Activated CD4-positive, alpha-beta memory T cell treated with anti-CD3 and anti-CD28 coated beads, Interleukin-2, amount 10 ng/mL, durations not matched to agents 7 days and 5 days (primary cell): ENCODE measurements at regions of chr16 and their contacts with region 1.

Region 1: DNA sequence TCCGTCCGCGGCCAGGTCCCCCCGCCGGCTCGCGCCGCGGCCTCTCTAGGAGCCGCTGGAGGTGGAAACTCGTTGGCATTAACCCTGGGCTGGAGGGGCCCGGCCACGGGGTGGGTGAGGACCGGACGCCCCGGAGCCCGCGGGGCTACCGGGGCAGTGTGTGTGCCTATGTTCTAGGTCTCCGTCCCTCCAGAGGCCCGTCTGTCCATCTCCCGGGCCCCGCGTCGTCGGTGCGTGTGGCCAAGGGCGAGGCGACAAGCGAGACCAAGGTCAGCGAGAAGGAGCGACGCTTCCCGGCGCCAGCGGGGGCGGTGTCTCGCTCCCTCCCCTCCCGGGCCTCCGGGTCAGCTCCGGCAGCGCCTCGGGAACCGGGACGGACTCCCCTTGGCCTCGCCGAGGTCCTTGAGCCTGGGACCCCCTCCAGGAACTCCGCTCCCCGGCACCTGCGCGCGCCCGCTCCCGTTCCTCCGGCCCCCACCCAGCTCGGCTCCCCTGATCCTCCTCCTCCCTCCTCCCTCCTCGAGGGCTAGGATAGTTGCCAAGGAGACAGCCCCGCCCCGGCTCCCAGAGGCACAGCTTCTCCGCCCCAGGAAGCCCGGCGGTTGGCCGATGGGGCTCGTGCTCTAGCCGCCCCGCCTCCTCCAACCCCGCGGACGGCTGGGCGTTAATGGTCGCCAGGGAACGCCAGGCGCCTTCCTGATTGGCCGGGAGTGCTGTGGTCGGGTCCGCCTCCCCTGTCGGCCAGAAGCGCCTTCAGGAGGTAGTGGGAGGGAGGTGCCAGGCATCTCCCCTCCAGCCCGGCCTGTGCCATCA is 663 bp upstream of the ZNF768 start:
- DNase-seq: peak; percentile 97
- H3K4me3 Mint-ChIP-seq: peak overlapping the region; percentile 78
- H3K27ac Mint-ChIP-seq: peak overlapping the region; percentile 67
- H3K4me1 Mint-ChIP-seq: peaks cover 40% of the 10 kb centered on the region
- H3K27me3 Mint-ChIP-seq: no peaks in the 10 kb centered on the region

Region 2: GRCh38 chr16:30509081-30509765 is 17.8 kb before region 1 on chr16:
- CTCF ChIA-PET with region 1: no interaction called
- POLR2A ChIA-PET with region 1: interaction called, 11 read pairs
- DNase-seq: no peak
- H3K4me3 Mint-ChIP-seq: no peak overlapping the region
- H3K27ac Mint-ChIP-seq: peak overlapping the region; percentile 19
- H3K4me1 Mint-ChIP-seq: peaks cover 9% of the 10 kb centered on the region
- H3K27me3 Mint-ChIP-seq: no peaks in the 10 kb centered on the region

Region 3: GRCh38 chr16:30557957-30558788 is 31.1 kb after region 1 on chr16 and contains the start of gene ZNF764:
- CTCF ChIA-PET with region 1: interaction called, 18 read pairs
- POLR2A ChIA-PET with region 1: interaction called, 20 read pairs
- DNase-seq: peak; percentile 99
- H3K4me3 Mint-ChIP-seq: peak within 1 kb of the TSS; percentile 86
- H3K27ac Mint-ChIP-seq: peak within 1 kb of the TSS; percentile 90
- H3K4me1 Mint-ChIP-seq: peaks cover 51% of the 10 kb centered on the region
- H3K27me3 Mint-ChIP-seq: no peaks in the 10 kb centered on the region
- total RNA-seq, gene ZNF764: 16.0 to 16.8 TPM

Region 4: DNA sequence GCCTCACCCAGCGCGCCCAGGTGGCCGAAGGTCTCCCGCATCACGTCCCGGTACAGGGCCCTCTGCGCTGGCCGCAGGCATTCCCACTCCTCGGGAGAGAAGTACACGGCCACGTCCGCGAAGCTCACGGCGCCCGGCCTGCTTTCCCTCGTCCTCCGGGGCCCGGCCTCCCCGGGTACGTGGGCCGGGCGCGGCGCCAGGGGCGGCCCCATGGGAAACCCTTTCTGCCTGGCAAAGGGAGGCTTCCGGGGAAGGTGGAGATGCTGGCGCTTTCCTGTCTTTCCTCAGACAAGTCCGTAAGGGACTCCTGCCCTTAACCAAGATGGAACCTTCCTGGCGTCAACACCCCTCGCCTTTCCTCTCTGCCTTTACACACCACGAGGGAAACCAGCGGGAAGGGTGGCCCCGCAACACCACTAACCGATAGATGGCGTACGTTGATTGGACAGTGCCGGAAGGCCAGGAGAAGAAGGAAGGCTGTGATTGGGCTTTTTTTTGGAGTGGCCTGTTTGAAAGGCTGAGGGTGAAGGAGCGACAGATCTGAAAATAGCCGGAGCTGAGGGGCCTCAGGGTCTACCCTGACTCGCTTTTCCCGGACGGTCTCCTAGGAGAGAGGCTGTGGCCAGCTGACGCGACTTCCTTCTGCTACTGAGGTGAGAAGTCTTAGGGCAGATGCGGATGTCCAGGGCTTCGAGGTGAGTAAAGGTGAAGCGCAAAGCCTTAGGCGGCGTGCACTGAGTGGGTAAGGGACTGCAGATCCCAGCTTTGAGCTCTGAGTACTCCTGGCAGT is 58.6 kb after region 1 on chr16 and contains the start of gene ZNF785:
- CTCF ChIA-PET with region 1: no interaction called
- POLR2A ChIA-PET with region 1: interaction called, 15 read pairs
- DNase-seq: peak; percentile 96
- H3K4me3 Mint-ChIP-seq: peak within 1 kb of the TSS; percentile 77
- H3K27ac Mint-ChIP-seq: peak within 1 kb of the TSS; percentile 61
- H3K4me1 Mint-ChIP-seq: peaks cover 36% of the 10 kb centered on the region
- H3K27me3 Mint-ChIP-seq: no peaks in the 10 kb centered on the region
- total RNA-seq, gene ZNF785: 12.9 to 13.3 TPM